ENCODE measurements at regions of chr5 and their contacts with region 1.

Region 1: GRCh38 chr5:76402886-76403765 is at the start of gene IQGAP2:
- DNase-seq: peak; percentile 85
- H3K4me3 ChIP-seq: peak within 1 kb of the TSS; percentile 7 to 89 (median 74)
- H3K27ac ChIP-seq: peak within 1 kb of the TSS; percentile 84 to 94 (median 92)
- H3K4me1 ChIP-seq: peaks cover 0 to 35% (median 10%) of the 10 kb centered on the region in 4 donors
- H3K27me3 ChIP-seq: no peaks in the 10 kb centered on the region
- CTCF ChIP-seq: peak; percentile 57 to 94 (median 76)
- EP300 ChIP-seq: no peak
- POLR2A ChIP-seq: peak; percentile 57
- total RNA-seq, gene IQGAP2: 46.8 to 121 (median 97.0) TPM

Region 2: DNA sequence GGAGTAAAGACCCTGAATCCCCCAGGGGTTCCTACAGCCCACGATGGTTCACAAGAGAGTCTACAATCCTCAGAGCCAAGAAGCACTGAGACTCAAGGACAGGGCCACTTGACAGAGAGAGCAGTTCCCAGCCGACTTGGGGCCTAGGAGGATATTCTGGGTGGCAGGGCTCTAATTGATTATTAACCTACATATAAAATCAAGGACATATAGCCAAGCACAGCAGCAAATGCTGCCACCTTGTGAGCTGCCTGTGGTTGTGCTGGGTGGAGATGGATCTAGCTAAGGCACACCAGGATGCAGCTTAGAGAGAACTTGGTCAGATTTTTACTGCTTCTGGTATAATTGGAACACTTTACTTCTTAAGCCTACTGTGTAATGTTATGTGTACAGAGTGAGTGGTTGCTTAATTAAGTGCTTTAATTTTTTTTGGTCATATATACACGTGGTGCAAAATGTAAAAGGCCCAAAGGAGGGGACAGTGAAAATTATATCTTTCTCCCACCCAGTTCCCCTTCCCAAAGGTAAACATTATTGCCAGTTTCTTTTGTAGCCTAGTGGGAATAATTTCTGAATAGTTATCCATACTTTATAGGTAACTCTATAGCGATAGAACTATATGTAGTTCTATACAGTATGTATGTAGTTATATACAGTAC is 141.3 kb after region 1 on chr5:
- in situ Hi-C with region 1: loop called in 3 of 4 experiments (anchors 10 to 25 kb)
- intact Hi-C with region 1: no loop called
- DNase-seq: peak; percentile 70
- H3K4me3 ChIP-seq: no peak overlapping the region
- H3K27ac ChIP-seq: peak overlapping the region; percentile 42 to 66 (median 58)
- H3K4me1 ChIP-seq: peaks cover 5 to 55% (median 29%) of the 10 kb centered on the region in 4 donors
- H3K27me3 ChIP-seq: no peaks in the 10 kb centered on the region
- CTCF ChIP-seq: peak; percentile 49 to 83 (median 66)
- EP300 ChIP-seq: no peak
- POLR2A ChIP-seq: no peak

Region 3: DNA sequence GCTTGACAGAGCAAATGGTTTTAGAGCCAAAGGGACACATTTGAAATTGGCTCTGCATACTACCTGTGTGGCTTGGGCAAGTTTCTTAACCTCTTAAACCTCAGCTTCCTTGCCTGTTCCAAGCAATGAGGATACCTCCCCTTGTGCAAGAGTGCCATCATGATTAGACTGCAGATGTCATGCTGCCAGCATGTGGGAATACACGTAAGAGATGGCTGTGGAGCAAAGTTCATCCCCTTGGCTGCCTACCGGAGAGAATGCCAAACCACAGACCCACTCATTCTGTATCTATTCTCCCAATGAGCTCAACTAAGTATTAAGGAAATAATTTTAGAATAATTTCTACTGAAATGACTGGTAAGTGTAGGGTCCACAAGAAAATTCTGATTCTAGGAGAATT is 987.7 kb after region 1 on chr5:
- in situ Hi-C with region 1: no loop called
- intact Hi-C with region 1: no loop called
- DNase-seq: no peak
- H3K4me3 ChIP-seq: no peak overlapping the region
- H3K27ac ChIP-seq: peak overlapping the region in 1 of 4 donors; percentile 58
- H3K4me1 ChIP-seq: peaks cover 0 to 16% (median 0%) of the 10 kb centered on the region in 4 donors
- H3K27me3 ChIP-seq: no peaks in the 10 kb centered on the region
- CTCF ChIP-seq: no peak
- EP300 ChIP-seq: no peak
- POLR2A ChIP-seq: no peak

Measured in transverse colon (tissue), 4 donors.